HepG2 (cell line): ENCODE measurements at regions of chr2 and their contacts with region 1.

Region 1: GRCh38 chr2:11498543-11499080 is 32.7 kb upstream of the E2F6 start:
- DNase-seq: peak; percentile 80
- ATAC-seq: peak; percentile 66
- H3K4me3 ChIP-seq: peak overlapping the region; percentile 35 to 70 (median 46)
- H3K27ac ChIP-seq: peak overlapping the region; percentile 98
- H3K4me1 ChIP-seq: peaks cover 97% of the 10 kb centered on the region
- H3K27me3 ChIP-seq: no peaks in the 10 kb centered on the region
- CTCF ChIP-seq: no peak
- EP300 ChIP-seq: no peak
- POLR2A ChIP-seq: peak; percentile 66 to 82; a peak in 3 of 4 replicates
- RAD21 ChIP-seq: 0 out of 2 replicates have a peak, but pooled peaks have one; percentile 20

Region 2: GRCh38 chr2:10993001-10993481 is 505.6 kb before region 1 on chr2:
- CTCF ChIA-PET with region 1: no interaction called
- POLR2A ChIA-PET with region 1: no interaction called
- in situ Hi-C with region 1: no loop called
- intact Hi-C with region 1: no loop called
- DNase-seq: no peak
- ATAC-seq: no peak
- H3K4me3 ChIP-seq: no peak overlapping the region
- H3K27ac ChIP-seq: no peak overlapping the region
- H3K4me1 ChIP-seq: no peaks in the 10 kb centered on the region
- H3K27me3 ChIP-seq: peaks cover 11 to 52% of the 10 kb centered on the region in 2 experiments; a peak in 4 of 5 replicates
- CTCF ChIP-seq: no peak
- EP300 ChIP-seq: no peak
- POLR2A ChIP-seq: no peak
- RAD21 ChIP-seq: no peak

Region 3: DNA sequence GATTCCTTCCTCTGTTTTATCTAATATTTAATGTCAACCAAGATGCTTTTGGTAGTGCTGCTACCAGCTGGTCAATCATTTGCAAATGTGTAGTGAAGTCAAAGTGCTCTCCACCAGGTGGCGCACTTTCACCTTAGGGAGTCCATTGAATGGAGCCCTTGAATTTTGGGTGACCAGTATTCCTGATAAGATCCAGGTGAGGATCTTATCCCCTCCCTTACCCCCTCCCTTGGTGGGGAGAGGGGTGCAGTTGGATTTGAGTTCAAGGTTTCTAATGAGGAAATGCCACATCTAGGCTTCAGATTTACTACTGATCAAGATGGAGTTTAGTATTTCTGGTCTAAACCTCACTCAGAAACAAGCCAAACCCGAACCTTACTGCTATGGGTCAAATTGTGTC is 20.6 kb before region 1 on chr2:
- CTCF ChIA-PET with region 1: no interaction called
- POLR2A ChIA-PET with region 1: interaction called, 102 read pairs
- in situ Hi-C with region 1: no loop called
- intact Hi-C with region 1: loop called (anchors 2 kb)
- DNase-seq: peak; percentile 90
- ATAC-seq: peak; percentile 66
- H3K4me3 ChIP-seq: no peak overlapping the region
- H3K27ac ChIP-seq: no peak overlapping the region
- H3K4me1 ChIP-seq: peaks cover 52% of the 10 kb centered on the region
- H3K27me3 ChIP-seq: no peaks in the 10 kb centered on the region
- CTCF ChIP-seq: peak; percentile 95
- EP300 ChIP-seq: peak in 1 of 2 experiments; percentile 17; a peak in 1 of 4 replicates
- POLR2A ChIP-seq: no peak
- RAD21 ChIP-seq: peak; percentile 97

Region 4: DNA sequence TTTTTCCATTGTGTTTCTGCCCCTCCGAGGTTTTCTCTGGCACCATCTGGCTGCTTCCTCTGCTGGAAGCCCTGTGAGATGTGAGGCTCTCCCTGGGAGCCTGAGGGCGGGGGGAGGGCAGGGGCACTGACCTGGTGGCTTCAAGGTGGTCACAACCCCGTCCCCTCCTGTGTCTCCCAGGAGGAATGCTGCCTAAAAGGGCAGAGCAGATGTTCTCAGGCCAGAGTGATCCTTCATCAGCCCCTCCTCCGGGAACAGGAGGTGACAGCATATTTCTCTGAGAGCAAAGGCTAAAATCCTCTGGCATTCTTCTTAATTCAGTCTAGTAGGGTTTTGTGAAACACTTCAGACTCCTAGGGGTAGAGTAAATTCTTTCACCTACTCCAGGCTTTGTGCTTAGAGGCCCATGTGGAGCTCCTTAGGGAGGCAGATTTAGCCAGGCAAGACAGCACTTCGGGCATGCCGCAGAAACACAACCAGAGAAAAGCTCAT is 16.9 kb after region 1 on chr2:
- CTCF ChIA-PET with region 1: no interaction called
- POLR2A ChIA-PET with region 1: interaction called, 16 read pairs
- in situ Hi-C with region 1: no loop called
- intact Hi-C with region 1: no loop called
- DNase-seq: no peak
- ATAC-seq: peak; percentile 45
- H3K4me3 ChIP-seq: no peak overlapping the region
- H3K27ac ChIP-seq: peak overlapping the region; percentile 28
- H3K4me1 ChIP-seq: peaks cover 85% of the 10 kb centered on the region
- H3K27me3 ChIP-seq: no peaks in the 10 kb centered on the region
- CTCF ChIP-seq: no peak
- EP300 ChIP-seq: no peak
- POLR2A ChIP-seq: no peak
- RAD21 ChIP-seq: no peak

Region 5: DNA sequence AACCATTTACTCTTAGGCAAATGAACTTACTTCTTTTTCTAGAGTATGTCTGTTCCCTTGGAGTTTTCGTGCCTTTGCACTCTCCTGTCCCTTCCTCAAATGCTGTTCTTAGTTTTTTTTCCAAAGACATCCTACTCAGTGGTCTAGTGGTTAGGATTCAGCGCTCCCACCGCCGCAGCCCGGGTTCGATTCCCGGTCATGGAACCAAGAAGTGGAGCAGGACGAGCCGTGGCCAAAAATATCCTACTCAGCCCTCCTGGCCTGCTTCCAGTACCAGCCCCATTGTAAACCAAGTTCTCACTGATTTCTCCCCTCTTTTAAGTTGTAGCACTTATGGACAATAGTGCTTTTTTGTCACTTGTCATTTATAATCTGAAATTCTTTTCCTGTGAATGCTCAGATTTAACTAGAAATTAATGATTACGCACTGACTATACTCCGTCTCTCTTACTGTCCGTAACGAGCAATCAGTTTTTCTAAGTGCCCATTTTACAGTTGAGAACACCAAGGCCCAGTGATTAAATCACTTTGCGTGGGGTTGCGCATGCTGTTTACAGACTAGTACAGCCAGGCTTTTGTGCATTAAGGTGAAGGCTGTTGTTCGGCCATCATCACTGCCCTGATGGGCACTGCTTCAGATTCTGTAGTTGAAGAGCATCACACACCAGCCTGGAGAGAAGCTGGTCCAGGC is 53.1 kb after region 1 on chr2:
- CTCF ChIA-PET with region 1: no interaction called
- POLR2A ChIA-PET with region 1: interaction called, 13 read pairs
- in situ Hi-C with region 1: no loop called
- intact Hi-C with region 1: no loop called
- DNase-seq: no peak
- ATAC-seq: no peak
- H3K4me3 ChIP-seq: no peak overlapping the region
- H3K27ac ChIP-seq: no peak overlapping the region
- H3K4me1 ChIP-seq: peaks cover 75% of the 10 kb centered on the region
- H3K27me3 ChIP-seq: no peaks in the 10 kb centered on the region
- CTCF ChIP-seq: no peak
- EP300 ChIP-seq: no peak
- POLR2A ChIP-seq: no peak
- RAD21 ChIP-seq: no peak